OCI-LY7 (cell line): ENCODE measurements at regions of chr10 and their contacts with region 1.

Region 1: DNA sequence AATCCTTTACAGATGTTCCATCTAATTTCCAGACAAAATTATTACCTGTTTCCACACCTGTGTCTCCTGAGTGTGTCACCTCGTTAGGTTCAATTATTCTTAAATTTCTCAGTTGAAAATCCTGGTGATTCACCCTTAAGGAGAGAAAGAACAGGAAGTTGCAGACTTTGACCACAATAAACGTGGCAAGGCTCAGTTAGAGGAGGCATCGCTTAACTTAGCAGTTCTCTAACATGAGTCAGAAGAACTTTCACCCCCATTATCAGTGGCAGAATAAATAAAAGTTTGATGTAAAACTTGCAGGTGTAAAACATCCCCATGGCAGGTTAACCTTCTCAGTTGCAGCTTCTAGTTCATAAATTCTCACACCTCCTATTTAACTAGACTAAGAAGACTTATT is 8.3 kb downstream of the XPNPEP1 start:
- DNase-seq: peak; percentile 81
- H3K4me3 ChIP-seq: peak overlapping the region; percentile 40
- H3K27ac ChIP-seq: peak overlapping the region; percentile 98
- H3K4me1 ChIP-seq: peaks cover 88% of the 10 kb centered on the region
- CTCF ChIP-seq: no peak

Region 2: GRCh38 chr10:109894516-109894915 is 20.4 kb before region 1 on chr10:
- CTCF ChIA-PET with region 1: interaction called, 3 read pairs
- POLR2A ChIA-PET with region 1: interaction called, 58 read pairs
- intact Hi-C with region 1: no loop called
- DNase-seq: no peak
- H3K4me3 ChIP-seq: no peak overlapping the region
- H3K27ac ChIP-seq: no peak overlapping the region
- H3K4me1 ChIP-seq: no peaks in the 10 kb centered on the region
- CTCF ChIP-seq: no peak

Region 3: DNA sequence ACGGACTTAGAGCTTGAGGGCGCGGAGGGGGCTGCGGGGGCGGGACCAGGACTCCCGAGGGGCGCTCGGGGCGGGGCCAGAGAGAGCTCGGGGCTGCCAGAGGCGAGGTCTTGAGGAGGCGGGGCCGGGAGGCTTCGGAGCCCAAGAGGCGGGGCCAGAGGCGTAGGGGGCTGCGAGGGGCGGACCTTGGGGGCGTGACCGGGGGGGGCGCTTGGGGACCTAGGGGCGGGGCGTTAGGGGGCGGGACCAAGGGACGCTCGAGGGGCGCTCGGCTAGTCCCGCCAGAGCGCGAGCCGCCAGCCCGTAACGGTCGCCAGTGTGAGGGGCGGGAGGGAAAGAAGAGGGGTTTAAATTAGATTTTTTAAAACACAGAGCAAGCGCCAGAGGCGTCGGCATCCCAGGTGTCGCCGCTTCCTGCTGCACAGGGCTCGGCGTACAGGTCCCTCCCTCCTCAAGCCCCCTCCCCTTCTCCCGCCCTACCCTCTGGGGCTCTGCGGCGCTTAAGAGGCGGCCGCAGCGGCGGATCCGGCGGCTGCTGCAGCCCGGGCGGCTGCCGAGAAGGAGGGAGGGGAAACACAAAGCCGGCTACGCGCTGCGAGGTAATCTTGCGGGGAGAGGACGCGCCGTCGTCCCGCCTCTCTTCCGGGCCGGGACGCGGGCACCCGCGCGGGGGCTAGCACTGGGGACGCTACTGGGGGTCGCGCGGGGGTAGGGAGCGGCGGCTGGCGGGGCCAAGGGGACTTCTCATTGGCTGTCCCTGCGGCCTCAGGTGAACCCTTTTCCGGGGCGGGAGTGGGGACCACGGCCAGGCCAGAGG is 92.9 kb after region 1 on chr10 and contains the start of gene ADD3:
- CTCF ChIA-PET with region 1: no interaction called
- POLR2A ChIA-PET with region 1: interaction called, 8 read pairs
- intact Hi-C with region 1: loop called (anchors 1 kb)
- DNase-seq: peak; percentile 97
- H3K4me3 ChIP-seq: peak within 1 kb of the TSS; percentile 96
- H3K27ac ChIP-seq: peak within 1 kb of the TSS; percentile 84
- H3K4me1 ChIP-seq: peaks cover 62% of the 10 kb centered on the region
- CTCF ChIP-seq: no peak
- total RNA-seq, gene ADD3: 53.3 and 75.8 TPM in 2 replicates

Region 4: GRCh38 chr10:110076559-110077318 is 161.8 kb after region 1 on chr10:
- CTCF ChIA-PET with region 1: no interaction called
- POLR2A ChIA-PET with region 1: interaction called, 5 read pairs
- intact Hi-C with region 1: loop called (anchors 5 kb)
- DNase-seq: peak; percentile 69
- H3K4me3 ChIP-seq: peak overlapping the region; percentile 38
- H3K27ac ChIP-seq: peak overlapping the region; percentile 60
- H3K4me1 ChIP-seq: peaks cover 54% of the 10 kb centered on the region
- CTCF ChIP-seq: no peak

Region 5: DNA sequence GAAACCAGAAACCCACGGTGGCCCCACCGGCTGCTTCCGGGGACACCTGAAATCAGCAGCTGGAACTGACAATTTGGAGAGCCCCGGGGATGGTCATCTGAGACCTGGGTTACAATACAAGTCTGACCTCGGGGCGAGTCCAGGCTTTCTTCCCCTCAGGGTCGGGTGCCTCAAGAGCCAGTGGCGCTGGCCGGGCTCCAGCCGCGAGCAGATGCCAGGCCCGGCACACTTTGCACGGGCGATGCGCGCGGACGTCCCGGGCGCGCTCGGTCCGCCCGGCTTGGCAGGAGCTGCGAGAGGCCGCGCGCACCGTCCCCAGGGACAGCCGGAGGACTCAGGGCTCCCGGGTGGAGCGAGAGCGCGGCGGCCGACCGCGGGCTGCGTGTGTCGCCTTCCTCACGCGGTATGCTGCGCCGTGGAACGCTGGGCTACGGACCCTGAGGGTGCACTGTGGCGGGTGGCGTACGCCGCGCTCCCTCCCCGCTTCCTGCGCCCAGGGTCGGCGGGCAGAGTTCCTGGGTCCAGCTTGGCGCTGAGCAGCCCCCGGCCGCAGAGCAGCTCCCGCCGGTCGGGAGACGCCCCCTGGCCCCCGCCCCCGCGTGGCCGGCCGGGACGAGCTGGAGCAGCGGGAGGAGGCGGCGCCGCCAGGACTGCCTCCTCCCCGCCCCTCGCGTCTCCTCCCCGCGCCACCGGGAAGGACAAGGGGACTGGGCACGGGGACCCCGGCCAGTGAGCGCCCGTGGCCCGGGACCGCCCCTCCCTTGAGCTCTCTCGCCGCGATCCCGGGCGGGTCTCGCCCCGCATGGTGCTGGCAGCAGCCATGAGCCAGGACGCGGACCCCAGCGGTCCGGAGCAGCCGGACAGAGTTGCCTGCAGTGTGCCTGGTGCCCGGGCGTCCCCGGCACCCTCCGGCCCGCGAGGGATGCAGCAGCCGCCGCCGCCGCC is 729.0 kb after region 1 on chr10 and contains the start of gene RBM20:
- CTCF ChIA-PET with region 1: no interaction called
- POLR2A ChIA-PET with region 1: no interaction called
- intact Hi-C with region 1: loop called (anchors 10 kb)
- DNase-seq: no peak
- H3K4me3 ChIP-seq: peak within 1 kb of the TSS; percentile 68
- H3K27ac ChIP-seq: no peak within 1 kb of the TSS
- H3K4me1 ChIP-seq: peaks cover 55% of the 10 kb centered on the region
- CTCF ChIP-seq: no peak
- total RNA-seq, gene RBM20: 0.35 and 0.82 TPM in 2 replicates